ENCODE measurements at regions of chr19 and their contacts with region 1.

Region 1: GRCh38 chr19:47436712-47437401 is 17.5 kb upstream of the MEIS3 start:
- DNase-seq: peak; percentile 62
- ATAC-seq: peak; percentile 96
- H3K4me3 ChIP-seq: no peak overlapping the region
- H3K27ac ChIP-seq: no peak overlapping the region
- H3K4me1 ChIP-seq: peaks cover 0 to 10% of the 10 kb centered on the region in 2 experiments; a peak in 2 of 4 replicates
- H3K27me3 ChIP-seq: no peaks in the 10 kb centered on the region
- CTCF ChIP-seq: peak; percentile 91 to 96 (median 92)
- POLR2A ChIP-seq: no peak
- RAD21 ChIP-seq: peak; percentile 99

Region 2: DNA sequence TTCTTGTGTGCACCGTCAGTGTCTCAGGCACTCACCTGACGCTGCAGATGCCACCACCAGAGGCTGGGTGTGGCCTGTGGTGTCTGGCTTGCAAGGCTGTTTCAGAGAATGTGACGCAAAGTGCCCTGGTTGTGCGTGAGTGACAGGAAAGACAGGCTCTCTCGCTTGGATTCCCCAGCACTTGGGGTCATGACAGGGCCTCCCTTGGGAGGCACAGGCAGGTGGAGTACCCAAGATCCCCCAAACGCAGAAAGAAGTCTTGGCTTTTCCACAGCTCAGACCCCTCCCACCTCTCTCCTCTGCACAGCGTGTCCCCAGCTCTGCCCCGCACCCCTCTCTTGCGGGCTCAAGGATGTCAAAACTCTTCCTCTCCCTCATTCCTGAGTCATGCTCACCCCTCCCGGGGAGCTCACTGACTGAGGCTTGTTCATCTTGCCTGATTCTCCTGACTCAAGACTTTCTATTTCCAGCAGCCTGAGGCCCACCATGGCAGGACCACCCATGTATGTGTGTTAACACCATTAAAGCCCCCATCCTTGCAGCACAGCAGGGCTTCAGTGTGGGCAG is 66.7 kb before region 1 on chr19:
- CTCF ChIA-PET with region 1: no interaction called
- POLR2A ChIA-PET with region 1: no interaction called
- RAD21 ChIA-PET with region 1: no interaction called
- intact Hi-C with region 1: no loop called
- DNase-seq: no peak
- ATAC-seq: no peak
- H3K4me3 ChIP-seq: no peak overlapping the region
- H3K27ac ChIP-seq: no peak overlapping the region
- H3K4me1 ChIP-seq: no peaks in the 10 kb centered on the region
- H3K27me3 ChIP-seq: no peaks in the 10 kb centered on the region
- CTCF ChIP-seq: no peak
- POLR2A ChIP-seq: no peak
- RAD21 ChIP-seq: no peak

Region 3: GRCh38 chr19:47447470-47448359 is 10.9 kb after region 1 on chr19:
- CTCF ChIA-PET with region 1: interaction called, 32 read pairs
- POLR2A ChIA-PET with region 1: interaction called, 6 read pairs
- RAD21 ChIA-PET with region 1: interaction called, 4 to 7 read pairs
- intact Hi-C with region 1: no loop called
- DNase-seq: peak; percentile 85
- ATAC-seq: peak; percentile 88
- H3K4me3 ChIP-seq: peak overlapping the region; percentile 36 to 55
- H3K27ac ChIP-seq: peak overlapping the region; percentile 56; the same call in 1 of the 2 replicates
- H3K4me1 ChIP-seq: peaks cover 17 to 23% of the 10 kb centered on the region in 2 experiments
- H3K27me3 ChIP-seq: peaks cover 19% of the 10 kb centered on the region
- CTCF ChIP-seq: no peak
- POLR2A ChIP-seq: no peak
- RAD21 ChIP-seq: no peak

Region 4: GRCh38 chr19:47483800-47484690 is 47.2 kb after region 1 on chr19 and contains the start of gene KPTN:
- CTCF ChIA-PET with region 1: interaction called, 27 read pairs
- POLR2A ChIA-PET with region 1: no interaction called
- RAD21 ChIA-PET with region 1: interaction called, 5 read pairs
- intact Hi-C with region 1: no loop called
- DNase-seq: peak; percentile 86
- ATAC-seq: peak; percentile 83
- H3K4me3 ChIP-seq: peak within 1 kb of the TSS; percentile 71 to 92
- H3K27ac ChIP-seq: peak within 1 kb of the TSS; percentile 78
- H3K4me1 ChIP-seq: peaks cover 6 to 18% of the 10 kb centered on the region in 2 experiments; a peak in 2 of 4 replicates
- H3K27me3 ChIP-seq: no peaks in the 10 kb centered on the region
- CTCF ChIP-seq: peak; percentile 68 to 96 (median 92); a peak in 5 of 6 replicates
- POLR2A ChIP-seq: no peak
- RAD21 ChIP-seq: peak; percentile 70
- total RNA-seq, gene KPTN: 23.8 TPM

Region 5: GRCh38 chr19:47514869-47515588 is 78.2 kb after region 1 on chr19 and contains the start of gene NAPA:
- CTCF ChIA-PET with region 1: interaction called, 13 read pairs
- POLR2A ChIA-PET with region 1: no interaction called
- RAD21 ChIA-PET with region 1: interaction called, 4 to 5 read pairs
- intact Hi-C with region 1: loop called (anchors 1 kb)
- DNase-seq: peak; percentile 99
- ATAC-seq: peak; percentile 95
- H3K4me3 ChIP-seq: peak within 1 kb of the TSS; percentile 88 to 100
- H3K27ac ChIP-seq: peak within 1 kb of the TSS; percentile 64
- H3K4me1 ChIP-seq: peaks cover 8 to 26% of the 10 kb centered on the region in 2 experiments; a peak in 3 of 4 replicates
- H3K27me3 ChIP-seq: no peaks in the 10 kb centered on the region
- CTCF ChIP-seq: no peak
- POLR2A ChIP-seq: no peak
- RAD21 ChIP-seq: no peak; the same call in 1 of the 2 replicates
- total RNA-seq, gene NAPA: 58.8 TPM

Region 6: DNA sequence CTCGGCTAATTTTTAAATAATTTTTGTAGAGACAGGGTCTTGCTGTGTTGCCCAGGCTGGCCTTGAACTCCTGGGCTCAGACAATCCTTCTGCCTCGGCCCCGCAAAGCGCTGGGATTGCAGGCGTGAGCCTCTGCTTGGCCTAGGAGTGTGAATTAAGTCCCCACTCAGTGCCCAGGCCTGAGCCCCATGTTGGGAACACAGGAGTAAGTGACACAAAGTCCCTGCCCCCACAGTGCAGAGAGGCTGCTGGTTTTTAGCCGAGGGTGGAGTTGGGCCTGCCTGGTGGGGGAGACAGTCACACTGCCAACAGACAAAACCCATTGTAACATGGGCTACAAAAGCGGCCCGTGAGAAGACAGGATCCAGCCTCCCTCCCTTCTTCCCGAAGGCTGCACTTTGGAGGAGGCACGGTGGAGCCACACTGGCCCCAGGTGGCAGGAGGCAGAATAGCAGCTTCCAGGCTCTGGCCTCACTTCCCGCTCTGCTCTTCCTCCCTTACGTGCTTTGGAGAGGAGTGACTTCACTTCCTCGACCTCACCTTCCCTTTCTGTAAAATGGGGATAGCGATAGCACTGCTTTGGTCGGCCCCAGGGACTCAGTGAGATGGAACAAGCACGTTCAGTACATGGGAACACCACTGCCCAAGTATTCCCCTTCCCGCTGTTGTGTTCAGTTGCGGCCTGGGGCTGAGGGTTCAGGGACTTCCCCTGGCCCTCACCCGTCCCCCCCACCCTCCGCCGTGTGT is 261.2 kb after region 1 on chr19:
- CTCF ChIA-PET with region 1: interaction called, 38 read pairs
- POLR2A ChIA-PET with region 1: interaction called, 3 read pairs
- RAD21 ChIA-PET with region 1: interaction called in 1 of 2 experiments, 8 read pairs
- intact Hi-C with region 1: loop called (anchors 1 kb)
- DNase-seq: peak; percentile 68
- ATAC-seq: peak; percentile 89
- H3K4me3 ChIP-seq: no peak overlapping the region
- H3K27ac ChIP-seq: peak overlapping the region; percentile 49
- H3K4me1 ChIP-seq: peaks cover 3 to 8% of the 10 kb centered on the region in 2 experiments; a peak in 3 of 4 replicates
- H3K27me3 ChIP-seq: no peaks in the 10 kb centered on the region
- CTCF ChIP-seq: peak; percentile 92 to 99 (median 99)
- POLR2A ChIP-seq: no peak
- RAD21 ChIP-seq: peak; percentile 99

Region 7: GRCh38 chr19:47707135-47707925 is 270.5 kb after region 1 on chr19:
- CTCF ChIA-PET with region 1: interaction called, 68 read pairs
- POLR2A ChIA-PET with region 1: interaction called, 3 read pairs
- RAD21 ChIA-PET with region 1: interaction called, 12 to 15 read pairs
- intact Hi-C with region 1: loop called (anchors 1 kb)
- DNase-seq: peak; percentile 81
- ATAC-seq: peak; percentile 98
- H3K4me3 ChIP-seq: peak overlapping the region; percentile 24 to 35
- H3K27ac ChIP-seq: no peak overlapping the region; the same call in 1 of the 2 replicates
- H3K4me1 ChIP-seq: peaks cover 0 to 11% of the 10 kb centered on the region in 2 experiments; a peak in 2 of 4 replicates
- H3K27me3 ChIP-seq: no peaks in the 10 kb centered on the region
- CTCF ChIP-seq: peak; percentile 86 to 93 (median 92)
- POLR2A ChIP-seq: no peak
- RAD21 ChIP-seq: peak; percentile 94

Region 8: GRCh38 chr19:47713046-47714021 is 276.5 kb after region 1 on chr19 and contains the start of gene EHD2:
- CTCF ChIA-PET with region 1: interaction called, 68 read pairs
- POLR2A ChIA-PET with region 1: no interaction called
- RAD21 ChIA-PET with region 1: no interaction called
- intact Hi-C with region 1: no loop called
- DNase-seq: no peak
- ATAC-seq: peak; percentile 92
- H3K4me3 ChIP-seq: peak within 1 kb of the TSS; percentile 74 to 97
- H3K27ac ChIP-seq: peak within 1 kb of the TSS; percentile 93
- H3K4me1 ChIP-seq: peaks cover 5 to 17% of the 10 kb centered on the region in 2 experiments; a peak in 3 of 4 replicates
- H3K27me3 ChIP-seq: no peaks in the 10 kb centered on the region
- CTCF ChIP-seq: peak; percentile 83 to 95 (median 90)
- POLR2A ChIP-seq: peak; percentile 37
- RAD21 ChIP-seq: peak; percentile 99
- total RNA-seq, gene EHD2: 60.5 TPM

Measured in HCT116 (cell line).